ENCODE measurements at regions of chr1 and their contacts with region 1.

Region 1: DNA sequence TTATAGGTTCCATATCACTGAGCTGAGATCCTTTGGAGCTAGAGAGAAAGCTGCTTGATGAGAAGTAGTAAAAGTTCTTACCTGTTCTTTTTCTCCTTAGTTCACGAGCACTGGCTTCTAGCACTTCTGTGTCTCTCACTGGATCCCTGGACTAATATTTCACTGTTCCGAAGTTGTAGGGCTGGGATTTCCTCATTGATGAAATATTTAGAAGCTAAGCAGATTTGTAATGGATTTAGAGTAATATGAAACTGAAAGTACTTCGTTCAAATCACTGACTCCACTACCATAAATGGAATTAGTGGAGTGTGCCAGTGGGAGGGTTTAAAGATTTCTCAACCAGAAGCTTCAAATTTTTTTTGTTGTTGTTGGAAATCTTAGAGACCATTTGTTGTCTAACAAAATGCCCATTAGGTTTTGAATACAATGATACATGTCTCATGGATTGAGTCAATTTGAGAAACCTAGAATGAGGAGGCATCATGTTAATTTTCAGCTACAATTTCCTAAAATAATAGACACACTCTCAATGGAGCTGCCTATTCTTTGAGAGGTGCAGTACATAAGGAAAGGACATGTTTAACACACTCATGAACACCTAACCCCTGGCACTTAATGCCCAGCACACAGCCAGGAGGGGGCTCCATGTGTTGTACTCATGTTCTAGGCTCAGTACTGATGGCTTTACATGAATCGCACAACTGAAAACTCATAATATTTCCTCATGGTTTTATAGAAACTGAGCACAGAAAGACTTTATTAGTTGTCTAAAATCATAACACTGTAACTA is at the start of gene GBP1:
- DNase-seq: peak; percentile 51 to 57 (median 53)
- H3K4me3 ChIP-seq: peak within 1 kb of the TSS; percentile 65 to 74
- H3K4me3 Mint-ChIP-seq: peak within 1 kb of the TSS; percentile 90 to 100 (median 98)
- H3K27ac ChIP-seq: peak within 1 kb of the TSS; percentile 85
- H3K27ac Mint-ChIP-seq: peak within 1 kb of the TSS; percentile 94 to 100 (median 96)
- H3K4me1 ChIP-seq: peaks cover 56% of the 10 kb centered on the region
- H3K4me1 Mint-ChIP-seq: peaks cover 37 to 70% (median 51%) of the 10 kb centered on the region in 4 donors
- H3K27me3 ChIP-seq: no peaks in the 10 kb centered on the region
- H3K27me3 Mint-ChIP-seq: no peaks in the 10 kb centered on the region
- total RNA-seq, gene GBP1: 74.1 to 74.2 TPM

Region 2: GRCh38 chr1:89035080-89035479 is 30.2 kb before region 1 on chr1:
- CTCF ChIA-PET with region 1: interaction called, 7 read pairs
- POLR2A ChIA-PET with region 1: interaction called, 10 read pairs
- intact Hi-C with region 1: loop called (anchors 2 kb)
- DNase-seq: no peak
- H3K4me3 ChIP-seq: no peak overlapping the region
- H3K4me3 Mint-ChIP-seq: peak overlapping the region in 2 of 8 donors; percentile 57 to 83
- H3K27ac ChIP-seq: no peak overlapping the region
- H3K27ac Mint-ChIP-seq: peak overlapping the region in 5 of 7 donors; percentile 15 to 83 (median 77)
- H3K4me1 ChIP-seq: peaks cover 34% of the 10 kb centered on the region
- H3K4me1 Mint-ChIP-seq: peaks cover 46 to 79% (median 62%) of the 10 kb centered on the region in 4 donors
- H3K27me3 ChIP-seq: no peaks in the 10 kb centered on the region
- H3K27me3 Mint-ChIP-seq: no peaks in the 10 kb centered on the region

Region 3: DNA sequence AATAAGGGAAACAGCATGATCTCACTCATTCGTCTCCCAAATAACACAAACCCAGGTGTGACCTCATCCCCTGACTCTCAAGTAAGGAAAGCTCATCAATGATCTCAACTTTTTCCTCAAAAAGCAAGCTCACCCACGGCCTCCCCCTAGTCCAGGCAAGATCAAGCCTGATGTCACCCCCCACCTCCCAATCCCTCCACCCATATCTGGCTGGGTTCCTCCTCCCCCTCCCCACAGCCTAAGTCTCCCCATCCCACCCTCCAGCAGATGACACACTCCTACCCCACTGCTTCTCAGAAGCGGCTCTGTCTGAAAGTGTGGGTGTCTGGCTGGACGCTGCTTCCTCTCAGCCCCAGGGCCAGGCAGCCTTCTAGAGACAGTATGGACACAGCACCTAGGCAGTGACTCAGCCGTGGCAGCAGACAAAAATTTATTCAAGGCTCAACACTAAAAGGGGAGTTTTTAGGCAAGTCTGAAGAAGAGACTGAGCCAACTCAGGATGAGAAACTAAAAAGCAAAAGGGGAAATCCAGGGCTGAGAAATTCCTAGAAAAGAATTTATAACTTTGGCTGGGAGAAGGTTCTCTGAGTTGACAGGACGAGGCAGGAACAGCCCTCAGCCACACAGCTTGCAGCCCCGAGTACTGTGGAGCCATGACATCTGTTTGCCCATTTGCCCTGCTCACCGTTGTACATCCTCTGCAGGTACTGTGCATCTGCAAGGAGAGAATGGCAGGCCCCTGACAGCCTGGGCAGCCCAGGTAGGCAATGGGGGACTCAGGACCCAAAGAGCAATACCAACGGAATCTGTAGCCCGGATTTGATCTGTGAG is 674.0 kb after region 1 on chr1:
- CTCF ChIA-PET with region 1: no interaction called
- POLR2A ChIA-PET with region 1: no interaction called
- intact Hi-C with region 1: no loop called
- DNase-seq: peak in 1 of 5 donors; percentile 69
- H3K4me3 ChIP-seq: no peak overlapping the region
- H3K4me3 Mint-ChIP-seq: peak overlapping the region; percentile 46 to 82 (median 72)
- H3K27ac ChIP-seq: peak overlapping the region; percentile 41
- H3K27ac Mint-ChIP-seq: peak overlapping the region; percentile 88 to 96 (median 94)
- H3K4me1 ChIP-seq: peaks cover 51% of the 10 kb centered on the region
- H3K4me1 Mint-ChIP-seq: peaks cover 28 to 54% (median 43%) of the 10 kb centered on the region in 4 donors
- H3K27me3 ChIP-seq: no peaks in the 10 kb centered on the region
- H3K27me3 Mint-ChIP-seq: no peaks in the 10 kb centered on the region